ENCODE measurements at regions of chr19 and their contacts with region 1.

Region 1: DNA sequence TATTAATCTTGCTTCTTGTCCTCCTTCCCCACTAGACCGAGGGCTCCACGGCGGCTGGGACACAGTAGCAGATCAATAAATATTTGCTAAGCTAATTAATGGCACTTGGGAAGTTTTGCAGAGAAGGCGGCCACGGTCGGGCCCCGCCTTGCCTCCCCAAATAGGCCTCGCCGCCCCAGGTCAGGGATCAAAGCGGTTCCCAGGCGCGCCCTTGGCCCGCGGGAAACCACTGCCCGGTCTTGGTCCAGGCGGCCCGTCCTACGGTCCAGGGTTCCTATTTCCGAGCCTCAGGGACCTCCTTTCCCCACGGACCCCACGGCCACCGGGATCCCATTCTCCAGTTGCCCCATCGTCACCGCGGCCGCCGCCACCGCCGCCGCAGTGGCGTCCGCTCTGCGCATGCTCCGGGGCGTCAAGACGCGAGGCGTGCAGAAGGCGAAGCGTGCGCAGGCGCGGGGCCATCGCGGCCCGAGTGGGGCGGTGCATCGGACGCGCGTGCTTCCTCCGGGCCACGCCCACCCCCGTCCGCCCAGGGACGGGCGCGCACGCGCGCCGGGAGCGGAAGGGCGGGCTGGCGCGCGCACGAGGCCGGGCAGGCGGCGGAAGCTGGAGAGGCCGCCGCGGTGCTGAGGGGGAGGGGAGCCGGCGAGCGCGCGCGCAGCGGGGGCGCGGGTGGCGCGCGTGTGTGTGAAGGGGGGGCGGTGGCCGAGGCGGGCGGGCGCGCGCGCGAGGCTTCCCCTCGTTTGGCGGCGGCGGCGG is at the start of gene SMARCA4:
- DNase-seq: peak; percentile 99
- ATAC-seq: peak; percentile 87
- H3K4me3 Mint-ChIP-seq: peak within 1 kb of the TSS; percentile 93
- H3K27ac Mint-ChIP-seq: peak within 1 kb of the TSS; percentile 87
- H3K4me1 Mint-ChIP-seq: peaks cover 35% of the 10 kb centered on the region
- H3K27me3 Mint-ChIP-seq: no peaks in the 10 kb centered on the region
- CTCF ChIP-seq: no peak
- total RNA-seq, gene SMARCA4: 85.1 and 93.6 TPM in 2 replicates

Region 2: GRCh38 chr19:9140159-9140874 is 1820.2 kb before region 1 on chr19 and contains the start of gene ZNF317:
- CTCF ChIA-PET with region 1: no interaction called
- POLR2A ChIA-PET with region 1: interaction called, 11 read pairs
- intact Hi-C with region 1: no loop called
- DNase-seq: peak; percentile 74
- ATAC-seq: peak; percentile 93
- H3K4me3 Mint-ChIP-seq: peak within 1 kb of the TSS; percentile 99
- H3K27ac Mint-ChIP-seq: peak within 1 kb of the TSS; percentile 98
- H3K4me1 Mint-ChIP-seq: peaks cover 42% of the 10 kb centered on the region
- H3K27me3 Mint-ChIP-seq: peaks cover 3% of the 10 kb centered on the region
- CTCF ChIP-seq: no peak
- total RNA-seq, gene ZNF317: 64.4 and 65.8 TPM in 2 replicates

Region 3: DNA sequence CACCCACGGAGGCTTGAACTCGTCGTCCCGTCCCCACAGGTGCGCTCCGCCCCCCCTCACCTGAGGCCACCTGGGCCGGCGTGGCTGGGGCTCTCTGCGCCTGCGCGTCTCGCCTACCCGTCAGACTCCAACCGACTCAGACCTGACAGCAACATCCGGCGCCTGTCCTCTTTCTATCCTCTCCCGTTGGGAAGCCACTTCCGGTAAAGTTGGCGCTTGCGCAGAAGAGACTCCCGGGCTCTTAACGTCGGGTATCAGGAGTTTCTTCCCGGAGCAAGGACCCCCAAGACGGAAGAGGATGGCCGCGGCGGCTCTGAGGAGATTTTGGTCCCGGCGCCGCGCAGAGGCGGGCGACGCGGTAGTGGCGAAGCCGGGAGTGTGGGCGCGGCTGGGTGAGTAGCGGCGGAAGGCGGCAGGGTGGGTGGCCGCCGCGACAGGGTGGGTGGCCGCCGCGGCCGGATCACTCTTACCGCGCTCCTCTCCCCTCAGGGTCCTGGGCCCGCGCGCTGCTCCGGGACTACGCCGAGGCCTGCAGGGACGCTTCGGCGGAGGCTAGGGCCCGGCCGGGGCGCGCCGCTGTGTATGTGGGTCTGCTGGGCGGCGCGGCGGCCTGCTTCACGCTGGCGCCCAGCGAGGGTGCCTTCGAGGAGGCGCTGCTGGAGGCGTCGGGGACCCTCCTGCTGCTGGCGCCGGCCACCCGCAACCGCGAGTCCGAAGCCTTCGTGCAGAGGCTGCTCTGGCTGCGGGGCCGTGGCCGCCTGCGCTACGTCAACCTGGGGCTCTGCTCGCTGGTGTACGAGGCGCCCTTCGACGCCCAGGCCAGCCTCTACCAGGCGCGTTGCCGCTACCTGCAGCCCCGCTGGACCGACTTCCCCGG is 31.7 kb before region 1 on chr19 and contains the starts of genes TIMM29 and YIPF2:
- CTCF ChIA-PET with region 1: no interaction called
- POLR2A ChIA-PET with region 1: interaction called, 4 read pairs
- intact Hi-C with region 1: loop called (anchors 5 kb)
- DNase-seq: peak; percentile 80
- ATAC-seq: peak; percentile 85
- H3K4me3 Mint-ChIP-seq: peak within 1 kb of the TSS; percentile 92
- H3K27ac Mint-ChIP-seq: peak within 1 kb of the TSS; percentile 81
- H3K4me1 Mint-ChIP-seq: peaks cover 20% of the 10 kb centered on the region
- H3K27me3 Mint-ChIP-seq: no peaks in the 10 kb centered on the region
- CTCF ChIP-seq: no peak
- total RNA-seq, gene TIMM29: 16.6 and 19.5 TPM in 2 replicates
- total RNA-seq, gene YIPF2: 23.0 and 23.9 TPM in 2 replicates

Region 4: DNA sequence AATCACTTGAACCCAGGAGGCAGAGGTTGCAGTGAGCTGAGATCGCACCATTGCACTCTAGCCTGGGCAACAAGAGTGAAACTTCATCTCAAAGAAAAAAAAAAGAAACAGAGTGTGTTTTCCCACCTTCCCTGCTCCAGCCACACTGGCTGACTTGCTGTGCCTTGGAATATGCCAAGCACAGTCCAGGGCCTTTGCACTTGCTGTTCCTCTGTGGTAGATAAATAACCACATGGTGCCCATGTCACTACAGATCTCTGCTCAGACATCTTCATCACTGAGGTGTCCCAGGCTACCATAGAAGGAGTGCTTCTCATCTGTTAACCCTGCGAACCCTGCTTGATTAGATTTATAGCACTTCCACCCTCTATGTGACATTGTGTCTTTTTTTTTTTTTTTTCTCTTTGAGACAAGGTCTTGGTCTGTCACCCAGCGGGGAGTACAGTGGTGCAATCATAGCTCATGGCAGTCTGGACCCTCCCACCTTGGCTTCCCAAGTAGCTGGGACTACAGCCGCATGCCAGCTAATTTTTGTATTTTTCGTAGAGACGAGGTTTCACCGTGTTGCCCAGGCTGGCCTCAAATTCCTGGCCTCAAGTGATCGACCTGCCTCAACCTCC is 10.7 kb after region 1 on chr19:
- CTCF ChIA-PET with region 1: no interaction called
- POLR2A ChIA-PET with region 1: interaction called, 12 read pairs
- intact Hi-C with region 1: no loop called
- DNase-seq: no peak
- ATAC-seq: no peak
- H3K4me3 Mint-ChIP-seq: no peak overlapping the region
- H3K27ac Mint-ChIP-seq: no peak overlapping the region
- H3K4me1 Mint-ChIP-seq: peaks cover 56% of the 10 kb centered on the region
- H3K27me3 Mint-ChIP-seq: no peaks in the 10 kb centered on the region
- CTCF ChIP-seq: no peak

Region 5: GRCh38 chr19:11090054-11090900 is 129.8 kb after region 1 on chr19:
- CTCF ChIA-PET with region 1: no interaction called
- POLR2A ChIA-PET with region 1: no interaction called
- intact Hi-C with region 1: loop called (anchors 1 kb)
- DNase-seq: peak; percentile 71
- ATAC-seq: peak; percentile 87
- H3K4me3 Mint-ChIP-seq: peak overlapping the region; percentile 78
- H3K27ac Mint-ChIP-seq: peak overlapping the region; percentile 30
- H3K4me1 Mint-ChIP-seq: peaks cover 41% of the 10 kb centered on the region
- H3K27me3 Mint-ChIP-seq: peaks cover 15% of the 10 kb centered on the region
- CTCF ChIP-seq: no peak

Measured in activated B cell treated with CpG ODN at 0.5 μM for 24 hours (primary cell).